Common myeloid progenitor, CD34-positive (primary cell): ENCODE measurements at regions of chr7 and their contacts with region 1.

Region 1: GRCh38 chr7:19713676-19714075 is 4.8 kb upstream of the POLR1F start:
- DNase-seq: peak; percentile 73 to 85 (median 80)
- H3K4me3 ChIP-seq: no peak overlapping the region
- H3K27ac ChIP-seq: no peak overlapping the region
- H3K4me1 ChIP-seq: peaks cover 0 to 7% (median 4%) of the 10 kb centered on the region in 4 experiments
- H3K27me3 ChIP-seq: no peaks in the 10 kb centered on the region

Region 2: GRCh38 chr7:19747740-19748339 is 34.2 kb after region 1 on chr7:
- CTCF ChIA-PET with region 1: interaction called, 12 read pairs
- POLR2A ChIA-PET with region 1: no interaction called
- DNase-seq: peak; percentile 36 to 49 (median 38)
- H3K4me3 ChIP-seq: no peak overlapping the region
- H3K27ac ChIP-seq: no peak overlapping the region
- H3K4me1 ChIP-seq: no peaks in the 10 kb centered on the region
- H3K27me3 ChIP-seq: no peaks in the 10 kb centered on the region

Region 3: DNA sequence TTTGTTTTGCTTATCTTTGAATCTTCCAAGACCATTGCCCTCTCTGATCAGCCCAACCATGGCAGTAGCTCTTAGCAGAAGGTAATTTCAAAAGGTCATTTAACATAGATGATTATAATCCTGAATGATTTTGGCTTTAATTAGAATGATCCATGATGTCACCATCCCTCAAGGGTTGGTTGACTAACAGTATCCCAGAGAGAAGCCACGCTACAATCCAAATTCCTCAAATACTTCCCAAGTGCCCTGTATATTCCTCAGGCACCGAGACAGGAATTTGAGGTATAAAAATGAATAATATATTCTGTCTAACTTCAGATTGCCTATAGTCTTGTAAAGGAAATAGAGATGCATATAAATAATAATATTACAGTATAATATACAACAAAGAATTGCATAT is 101.9 kb after region 1 on chr7:
- CTCF ChIA-PET with region 1: no interaction called
- POLR2A ChIA-PET with region 1: no interaction called
- DNase-seq: no peak
- H3K4me3 ChIP-seq: no peak overlapping the region
- H3K27ac ChIP-seq: no peak overlapping the region
- H3K4me1 ChIP-seq: no peaks in the 10 kb centered on the region
- H3K27me3 ChIP-seq: no peaks in the 10 kb centered on the region

Region 4: DNA sequence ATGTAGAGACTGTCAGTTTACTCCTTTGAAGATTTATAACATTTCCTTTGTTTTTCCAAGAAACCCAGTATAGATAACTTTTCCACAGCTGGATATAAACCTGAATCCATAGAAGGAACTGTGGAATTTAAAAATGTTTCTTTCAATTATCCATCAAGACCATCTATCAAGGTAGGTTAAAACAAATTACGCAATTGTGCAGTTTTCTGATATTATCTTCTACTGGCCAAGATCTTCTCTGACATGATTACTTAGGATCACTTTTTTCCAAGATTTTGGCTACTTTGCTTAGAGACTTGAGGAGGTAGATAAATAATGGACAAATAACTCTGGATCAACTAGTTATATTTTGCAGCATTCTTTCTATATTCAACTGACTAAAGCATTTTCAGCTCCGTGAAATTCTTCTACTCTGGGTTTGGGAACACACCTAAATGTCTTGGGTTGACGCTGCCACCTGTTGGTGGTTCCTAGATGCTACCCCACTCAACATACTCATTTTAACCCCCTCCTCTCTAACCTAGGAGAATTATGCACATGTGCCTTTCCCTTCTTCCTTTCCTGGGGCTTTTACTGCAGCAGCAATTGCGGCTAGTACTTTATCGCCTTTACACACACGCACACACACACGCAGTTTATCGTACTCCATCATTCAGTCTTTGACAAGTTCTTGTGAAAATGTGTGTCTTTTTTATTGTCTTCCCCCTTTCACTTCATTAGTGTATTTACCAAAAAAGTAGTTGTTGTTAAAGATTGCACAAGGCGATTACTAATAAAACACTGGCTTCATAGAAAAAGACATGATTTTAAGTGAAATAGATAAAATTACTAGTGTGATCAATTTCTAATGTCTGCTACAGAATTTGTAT is 934.5 kb after region 1 on chr7:
- CTCF ChIA-PET with region 1: interaction called, 20 read pairs
- POLR2A ChIA-PET with region 1: interaction called, 4 read pairs
- DNase-seq: peak; percentile 63 to 83 (median 80)
- H3K4me3 ChIP-seq: peak overlapping the region in 1 of 7 experiments; percentile 29
- H3K27ac ChIP-seq: no peak overlapping the region
- H3K4me1 ChIP-seq: peaks cover 0 to 10% (median 3%) of the 10 kb centered on the region in 4 experiments
- H3K27me3 ChIP-seq: no peaks in the 10 kb centered on the region